Activated T-helper 1 cell treated with anti-CD3 and anti-CD28 coated beads, Interleukin-12 subunit alpha, Interleukin-12 subunit beta, Interleukin-2, Interleukin-4 antibody, amounts not matched to agents 30 ng/mL and 10 ng/mL and 1 ng/mL, durations not matched to agents 14 hours and 24 hours and 36 hours (primary cell): ENCODE measurements at regions of chr5 and their contacts with region 1.

Region 1: DNA sequence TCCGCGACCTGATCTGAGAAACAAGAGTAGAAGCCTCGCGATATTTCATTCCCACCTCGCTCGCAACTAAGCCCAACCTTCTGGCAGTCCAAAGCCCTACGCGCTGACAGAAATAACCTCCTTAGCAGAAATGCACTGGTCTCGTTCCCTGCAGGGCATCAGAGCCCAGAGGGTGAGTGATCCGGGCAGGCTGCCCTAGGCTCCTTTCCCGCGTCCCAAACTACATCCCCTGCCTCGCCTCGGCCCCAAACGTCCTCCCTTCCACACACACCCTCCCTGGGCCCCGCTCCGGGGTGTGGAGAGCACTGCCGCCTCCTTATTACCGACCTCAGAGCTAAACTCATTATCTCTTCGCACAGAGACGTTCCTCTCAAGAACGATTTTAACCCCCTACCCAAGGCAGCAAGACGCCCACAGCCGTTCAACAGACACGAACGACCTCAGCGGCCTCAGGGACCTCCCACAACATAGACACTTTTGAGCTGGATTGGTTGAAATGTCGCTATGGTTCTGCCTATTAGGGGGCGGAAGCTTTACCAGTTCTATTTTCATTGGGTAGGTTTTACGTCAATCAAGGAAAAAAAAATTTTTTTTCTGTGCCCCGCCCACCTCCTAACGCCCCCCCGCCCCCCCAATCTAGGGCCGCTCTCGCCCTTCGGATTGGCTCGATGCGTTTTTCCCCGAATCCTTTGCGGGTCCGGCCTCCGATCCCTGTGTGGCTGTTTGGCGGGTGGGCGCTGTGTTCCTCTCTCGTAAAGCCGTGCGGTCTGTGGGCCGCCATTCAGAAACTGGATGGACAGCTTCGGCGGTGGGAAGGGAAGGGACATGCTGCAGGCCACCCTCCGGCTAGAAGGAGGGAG is at the start of gene CETN3:
- DNase-seq: peak; percentile 86
- H3K4me3 Mint-ChIP-seq: no peak within 1 kb of the TSS
- H3K27ac Mint-ChIP-seq: no peak within 1 kb of the TSS
- H3K4me1 Mint-ChIP-seq: peaks cover 21% of the 10 kb centered on the region
- H3K27me3 Mint-ChIP-seq: peaks cover 3% of the 10 kb centered on the region
- total RNA-seq, gene CETN3: 36.2 and 39.8 TPM in 2 replicates

Region 2: GRCh38 chr5:90474235-90475109 is 64.9 kb after region 1 on chr5 and contains the starts of genes MBLAC2 and POLR3G:
- intact Hi-C with region 1: loop called (anchors 1 kb)
- DNase-seq: peak; percentile 87
- H3K4me3 Mint-ChIP-seq: peak within 1 kb of the TSS; percentile 98
- H3K27ac Mint-ChIP-seq: peak within 1 kb of the TSS; percentile 97
- H3K4me1 Mint-ChIP-seq: peaks cover 44% of the 10 kb centered on the region
- H3K27me3 Mint-ChIP-seq: no peaks in the 10 kb centered on the region
- total RNA-seq, gene MBLAC2: 5.0 and 5.7 TPM in 2 replicates
- total RNA-seq, gene POLR3G: 18.4 and 22.1 TPM in 2 replicates

Region 3: DNA sequence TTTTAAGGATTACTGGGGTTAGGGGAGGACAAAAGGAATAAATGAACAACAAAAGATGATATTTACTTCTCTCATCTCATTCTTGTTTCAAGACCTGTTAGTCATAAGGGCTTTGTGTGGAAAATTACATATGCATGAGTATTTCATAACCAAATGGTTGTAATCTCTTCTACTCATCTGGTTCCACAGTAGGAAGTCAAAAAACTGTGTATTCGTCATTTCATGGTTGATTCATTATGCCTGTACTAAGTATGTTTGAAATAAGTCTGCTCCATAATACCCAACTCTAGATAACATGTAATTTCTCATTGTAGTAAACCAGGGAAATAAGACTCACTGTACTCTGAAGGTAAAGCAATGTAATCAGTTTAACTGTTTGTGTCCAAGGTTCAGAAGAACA is 760.7 kb after region 1 on chr5:
- intact Hi-C with region 1: loop called (anchors 5 kb)
- DNase-seq: no peak
- H3K4me3 Mint-ChIP-seq: no peak overlapping the region
- H3K27ac Mint-ChIP-seq: peak overlapping the region; percentile 24
- H3K4me1 Mint-ChIP-seq: peaks cover 17% of the 10 kb centered on the region
- H3K27me3 Mint-ChIP-seq: peaks cover 11% of the 10 kb centered on the region